PC-3 (cell line): ENCODE measurements at regions of chr5 and their contacts with region 1.

Region 1: GRCh38 chr5:165457859-165458481 is 1952.6 kb downstream of the MAT2B start:
- DNase-seq: peak; percentile 29
- ATAC-seq: peak; percentile 27
- H3K4me3 ChIP-seq: no peak overlapping the region
- H3K27ac ChIP-seq: no peak overlapping the region
- H3K4me1 ChIP-seq: no peaks in the 10 kb centered on the region
- H3K27me3 ChIP-seq: no peaks in the 10 kb centered on the region
- CTCF ChIP-seq: peak; percentile 51

Region 2: GRCh38 chr5:164958688-164959087 is 499.3 kb before region 1 on chr5:
- CTCF ChIA-PET with region 1: no interaction called
- POLR2A ChIA-PET with region 1: no interaction called
- intact Hi-C with region 1: loop called (anchors 10 kb)
- DNase-seq: peak; percentile 2
- ATAC-seq: no peak
- H3K4me3 ChIP-seq: no peak overlapping the region
- H3K27ac ChIP-seq: no peak overlapping the region
- H3K4me1 ChIP-seq: no peaks in the 10 kb centered on the region
- H3K27me3 ChIP-seq: no peaks in the 10 kb centered on the region
- CTCF ChIP-seq: 0 out of 2 replicates have a peak, but pooled peaks have one; percentile 13

Region 3: GRCh38 chr5:165227511-165227910 is 230.5 kb before region 1 on chr5:
- CTCF ChIA-PET with region 1: no interaction called
- POLR2A ChIA-PET with region 1: no interaction called
- intact Hi-C with region 1: loop called (anchors 5 kb)
- DNase-seq: no peak
- ATAC-seq: no peak
- H3K4me3 ChIP-seq: no peak overlapping the region
- H3K27ac ChIP-seq: no peak overlapping the region
- H3K4me1 ChIP-seq: no peaks in the 10 kb centered on the region
- H3K27me3 ChIP-seq: no peaks in the 10 kb centered on the region
- CTCF ChIP-seq: no peak

Region 4: GRCh38 chr5:165321912-165322311 is 136.1 kb before region 1 on chr5:
- CTCF ChIA-PET with region 1: no interaction called
- POLR2A ChIA-PET with region 1: no interaction called
- intact Hi-C with region 1: loop called (anchors 10 kb)
- DNase-seq: peak; percentile 53
- ATAC-seq: peak; percentile 54; the same call in 1 of the 2 replicates
- H3K4me3 ChIP-seq: no peak overlapping the region
- H3K27ac ChIP-seq: no peak overlapping the region
- H3K4me1 ChIP-seq: no peaks in the 10 kb centered on the region
- H3K27me3 ChIP-seq: no peaks in the 10 kb centered on the region
- CTCF ChIP-seq: no peak